ENCODE measurements at regions of chr14 and their contacts with region 1.

Region 1: DNA sequence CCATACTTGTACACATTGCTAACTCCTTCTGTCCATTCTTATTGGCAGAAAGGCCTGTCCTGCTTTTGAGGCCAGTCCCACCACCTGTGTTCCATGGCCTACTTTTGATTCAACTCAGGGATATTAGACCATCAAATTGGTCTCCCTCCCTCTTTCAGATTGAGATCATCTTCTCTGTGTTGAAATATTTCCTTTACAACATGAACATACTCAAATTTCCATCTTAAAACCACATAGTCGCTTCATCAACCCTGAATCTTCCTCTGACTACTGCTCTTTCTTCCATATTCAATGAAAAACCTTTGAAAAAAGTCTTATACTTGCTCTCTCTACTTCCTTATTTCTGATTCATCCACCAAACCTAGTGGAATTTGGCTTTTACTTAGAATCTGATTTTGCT is 34.9 kb downstream of the TRMT5 start:
- DNase-seq: no peak
- H3K4me3 Mint-ChIP-seq: no peak overlapping the region
- H3K27ac Mint-ChIP-seq: peak overlapping the region; percentile 67
- H3K4me1 Mint-ChIP-seq: peaks cover 12% of the 10 kb centered on the region
- H3K27me3 Mint-ChIP-seq: no peaks in the 10 kb centered on the region

Region 2: DNA sequence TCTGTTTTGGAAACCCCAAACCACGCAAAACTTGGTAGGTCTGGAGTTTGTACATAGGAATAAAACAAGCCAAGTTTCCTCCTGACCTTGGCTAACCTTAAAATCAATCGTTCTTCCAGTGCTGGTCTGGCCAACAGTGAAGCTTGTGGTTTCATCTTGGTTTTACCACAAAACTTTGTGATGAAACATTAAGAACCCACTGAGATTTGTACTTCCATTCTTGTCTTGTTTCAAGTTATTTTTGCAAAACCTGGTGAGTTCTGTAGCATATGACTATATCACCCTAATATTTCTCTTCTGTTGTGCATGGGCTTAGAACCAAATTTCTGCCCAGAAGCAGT is 323.1 kb before region 1 on chr14:
- intact Hi-C with region 1: no loop called
- DNase-seq: no peak
- H3K4me3 Mint-ChIP-seq: no peak overlapping the region
- H3K27ac Mint-ChIP-seq: no peak overlapping the region
- H3K4me1 Mint-ChIP-seq: no peaks in the 10 kb centered on the region
- H3K27me3 Mint-ChIP-seq: peaks cover 19% of the 10 kb centered on the region

Region 3: DNA sequence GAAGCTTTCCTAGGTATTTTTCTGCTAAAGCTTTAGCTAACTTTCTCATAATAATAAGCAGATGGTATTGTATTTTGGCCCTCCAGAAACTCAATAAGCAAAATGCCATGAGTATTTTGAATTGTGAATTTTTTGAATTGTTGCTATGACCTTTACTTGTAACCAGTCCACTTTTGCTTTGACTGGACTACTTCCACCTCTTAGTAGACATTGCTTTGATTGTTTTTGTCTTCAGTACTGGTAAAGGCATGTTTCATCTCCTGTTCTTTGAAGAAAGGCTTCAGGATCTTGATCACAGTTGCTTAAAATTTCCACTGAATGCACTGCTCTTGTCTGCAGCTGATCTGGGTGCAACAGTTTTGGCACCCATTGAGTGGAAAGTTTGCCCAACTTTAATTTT is 67.4 kb before region 1 on chr14:
- intact Hi-C with region 1: loop called (anchors 10 kb)
- DNase-seq: no peak
- H3K4me3 Mint-ChIP-seq: no peak overlapping the region
- H3K27ac Mint-ChIP-seq: no peak overlapping the region
- H3K4me1 Mint-ChIP-seq: peaks cover 8% of the 10 kb centered on the region
- H3K27me3 Mint-ChIP-seq: peaks cover 3% of the 10 kb centered on the region

Region 4: DNA sequence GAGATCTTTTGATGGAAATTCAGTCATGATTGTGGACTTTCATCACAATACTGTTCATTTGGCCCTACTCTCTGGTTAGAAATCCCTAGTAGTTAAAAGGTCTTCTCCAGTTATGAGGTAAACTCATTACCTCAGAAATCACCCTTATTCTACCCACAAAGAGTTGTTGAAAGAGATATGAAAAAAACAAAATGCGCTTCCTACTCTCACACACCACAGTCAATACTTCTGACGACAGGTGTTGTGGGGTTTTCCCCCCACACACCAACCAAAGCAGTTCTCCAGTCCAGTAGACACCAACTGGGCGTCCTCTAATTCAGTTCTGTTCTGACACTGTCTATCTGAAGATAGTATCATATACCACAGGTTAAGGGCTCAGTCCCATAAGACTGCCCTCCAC is 20.0 kb before region 1 on chr14:
- intact Hi-C with region 1: no loop called
- DNase-seq: no peak
- H3K4me3 Mint-ChIP-seq: no peak overlapping the region
- H3K27ac Mint-ChIP-seq: no peak overlapping the region
- H3K4me1 Mint-ChIP-seq: peaks cover 7% of the 10 kb centered on the region
- H3K27me3 Mint-ChIP-seq: no peaks in the 10 kb centered on the region

Region 5: GRCh38 chr14:60956202-60956601 is 10.2 kb after region 1 on chr14:
- intact Hi-C with region 1: loop called (anchors 1 kb)
- DNase-seq: no peak
- H3K4me3 Mint-ChIP-seq: no peak overlapping the region
- H3K27ac Mint-ChIP-seq: no peak overlapping the region
- H3K4me1 Mint-ChIP-seq: peaks cover 10% of the 10 kb centered on the region
- H3K27me3 Mint-ChIP-seq: no peaks in the 10 kb centered on the region

Region 6: DNA sequence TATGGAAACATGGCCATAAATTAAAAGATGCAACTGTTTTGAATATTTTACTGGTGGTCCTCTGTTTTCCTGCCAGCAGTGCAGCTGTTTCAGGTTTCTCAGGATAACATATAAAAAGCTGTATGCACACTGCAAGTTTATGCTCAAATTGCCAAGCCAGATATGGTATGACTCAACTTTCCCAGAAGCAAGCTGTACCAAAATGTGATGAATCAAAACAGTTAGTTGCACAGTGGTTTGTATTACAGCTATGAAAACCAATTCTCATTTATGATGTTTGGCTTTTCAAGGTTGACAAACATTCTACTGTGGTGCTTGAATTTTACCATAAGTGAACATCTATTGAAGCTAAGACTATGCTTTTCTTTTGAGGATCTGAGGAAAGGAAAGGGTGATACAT is 19.4 kb after region 1 on chr14:
- intact Hi-C with region 1: loop called (anchors 1 kb)
- DNase-seq: no peak
- H3K4me3 Mint-ChIP-seq: no peak overlapping the region
- H3K27ac Mint-ChIP-seq: no peak overlapping the region
- H3K4me1 Mint-ChIP-seq: peaks cover 16% of the 10 kb centered on the region
- H3K27me3 Mint-ChIP-seq: no peaks in the 10 kb centered on the region

Region 7: DNA sequence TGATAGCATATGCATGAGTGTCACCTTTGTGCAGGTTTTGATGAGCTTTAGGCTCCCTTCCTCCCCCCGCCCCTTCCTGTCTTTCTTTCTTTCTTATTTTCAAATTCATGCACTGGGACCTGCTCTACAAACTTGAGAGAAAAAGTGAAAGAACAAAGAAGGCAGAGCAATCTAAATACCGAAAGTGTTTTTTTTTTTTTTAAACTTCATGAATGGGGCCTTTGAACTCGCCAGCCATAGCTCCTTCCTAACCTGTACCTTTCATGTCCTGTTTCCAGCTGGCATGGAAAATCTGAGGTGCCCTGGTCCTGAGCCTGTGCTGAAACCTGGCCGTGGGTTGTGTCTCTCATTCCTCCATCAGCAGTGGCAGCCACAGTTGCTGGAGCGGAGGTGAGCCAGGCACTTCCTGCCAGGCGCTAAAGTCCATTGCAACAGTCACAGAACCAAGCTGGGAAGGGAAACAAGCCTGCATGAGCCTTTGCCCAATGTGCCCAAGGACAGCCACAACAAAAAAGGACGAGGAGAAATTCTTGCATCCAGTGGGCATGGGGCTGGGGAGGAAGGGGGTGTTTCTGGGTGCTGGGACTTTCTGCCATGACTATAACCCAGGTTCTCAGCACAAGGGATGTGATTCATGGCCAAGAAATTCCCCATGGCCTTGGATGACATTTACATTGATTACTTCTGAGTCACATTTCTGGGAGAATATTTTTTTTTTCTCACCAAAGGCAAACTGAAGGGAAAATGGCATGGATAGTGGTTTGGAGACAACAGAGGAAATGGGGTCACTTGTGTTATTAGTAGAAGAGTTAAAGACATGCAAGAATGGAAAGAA is 232.5 kb after region 1 on chr14:
- intact Hi-C with region 1: loop called (anchors 5 kb)
- DNase-seq: peak; percentile 27
- H3K4me3 Mint-ChIP-seq: peak overlapping the region; percentile 47
- H3K27ac Mint-ChIP-seq: peak overlapping the region; percentile 78
- H3K4me1 Mint-ChIP-seq: peaks cover 44% of the 10 kb centered on the region
- H3K27me3 Mint-ChIP-seq: peaks cover 2% of the 10 kb centered on the region

Measured in activated T-helper 1 cell treated with anti-CD3 and anti-CD28 coated beads, Interleukin-12 subunit alpha, Interleukin-12 subunit beta, Interleukin-2, Interleukin-4 antibody, amounts not matched to agents 30 ng/mL and 10 ng/mL and 1 ng/mL, durations not matched to agents 14 hours and 24 hours and 36 hours (primary cell).